Lower lobe of right lung (tissue), 2 donors: ENCODE measurements at regions of chr2 and their contacts with region 1.

Region 1: DNA sequence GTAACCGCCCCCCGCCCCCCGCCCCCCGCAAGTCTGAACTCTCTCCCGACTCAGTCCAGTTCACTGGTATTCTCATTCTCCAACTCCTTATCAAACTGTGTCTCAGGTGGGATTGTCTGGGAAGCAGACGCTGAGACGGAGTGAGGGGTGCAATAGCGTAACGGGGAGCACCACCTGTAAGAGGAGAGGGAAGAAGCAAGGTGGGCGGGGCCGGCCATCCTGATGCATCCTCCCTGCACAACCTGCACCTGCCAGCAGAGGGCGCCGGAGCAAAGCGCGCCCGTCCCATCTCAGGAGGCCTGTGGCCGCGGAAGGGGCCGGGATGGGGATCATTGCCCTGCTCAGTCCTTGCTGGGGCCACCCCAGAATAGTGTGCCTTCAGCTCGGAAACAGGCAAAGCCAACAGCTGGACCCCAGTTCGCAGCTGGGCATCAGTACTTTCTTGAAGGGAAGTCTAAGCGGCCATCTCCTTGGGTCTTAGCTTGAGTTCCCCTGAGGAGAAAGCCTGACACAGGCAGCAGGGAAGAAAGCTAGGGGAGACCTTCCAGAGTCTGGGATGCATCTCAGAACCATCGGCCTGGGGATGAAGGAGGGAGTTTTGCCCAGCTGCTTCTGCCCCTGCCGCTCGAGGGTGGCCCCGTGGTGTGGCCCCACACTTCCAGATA is 208.0 kb downstream of the TFCP2L1 start:
- DNase-seq: peak; percentile 86
- ATAC-seq: peak; percentile 82
- H3K4me3 ChIP-seq: no peak overlapping the region
- H3K27ac ChIP-seq: no peak overlapping the region
- H3K4me1 ChIP-seq: no peaks in the 10 kb centered on the region
- H3K27me3 ChIP-seq: peaks cover 43% of the 10 kb centered on the region
- CTCF ChIP-seq: peak; percentile 87

Region 2: DNA sequence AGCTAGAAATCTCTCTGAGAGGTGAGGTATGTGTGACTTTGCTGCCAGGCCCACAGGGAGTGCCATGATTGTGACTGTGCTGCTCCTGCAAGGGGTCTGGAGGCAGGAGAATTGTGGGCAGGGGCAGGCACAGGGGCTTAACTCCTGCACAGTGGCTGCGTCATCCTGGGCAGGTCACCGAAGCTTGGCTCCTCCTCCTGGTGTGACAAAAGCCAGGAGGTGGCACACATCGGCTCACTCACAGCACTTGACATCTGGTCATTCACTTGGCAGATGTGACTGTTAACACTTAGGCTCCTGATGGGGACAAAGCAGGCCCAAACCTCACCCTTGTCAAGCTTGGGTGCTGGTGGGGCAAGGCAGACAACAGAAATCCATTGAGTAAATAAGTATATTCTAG is 377.7 kb before region 1 on chr2:
- intact Hi-C with region 1: loop called (anchors 5 kb)
- DNase-seq: no peak
- ATAC-seq: no peak
- H3K4me3 ChIP-seq: no peak overlapping the region
- H3K27ac ChIP-seq: no peak overlapping the region
- H3K4me1 ChIP-seq: peaks cover 6% of the 10 kb centered on the region
- H3K27me3 ChIP-seq: peaks cover 37% of the 10 kb centered on the region
- CTCF ChIP-seq: no peak